ENCODE measurements at regions of chr1 and their contacts with region 1.

Region 1: GRCh38 chr1:95072532-95073419 is at the start of gene ALG14:
- DNase-seq: peak; percentile 95
- H3K4me3 Mint-ChIP-seq: peak within 1 kb of the TSS; percentile 90
- H3K27ac Mint-ChIP-seq: peak within 1 kb of the TSS; percentile 92
- H3K4me1 Mint-ChIP-seq: peaks cover 14% of the 10 kb centered on the region
- H3K27me3 Mint-ChIP-seq: no peaks in the 10 kb centered on the region
- total RNA-seq, gene ALG14: 4.3 to 4.4 TPM

Region 2: DNA sequence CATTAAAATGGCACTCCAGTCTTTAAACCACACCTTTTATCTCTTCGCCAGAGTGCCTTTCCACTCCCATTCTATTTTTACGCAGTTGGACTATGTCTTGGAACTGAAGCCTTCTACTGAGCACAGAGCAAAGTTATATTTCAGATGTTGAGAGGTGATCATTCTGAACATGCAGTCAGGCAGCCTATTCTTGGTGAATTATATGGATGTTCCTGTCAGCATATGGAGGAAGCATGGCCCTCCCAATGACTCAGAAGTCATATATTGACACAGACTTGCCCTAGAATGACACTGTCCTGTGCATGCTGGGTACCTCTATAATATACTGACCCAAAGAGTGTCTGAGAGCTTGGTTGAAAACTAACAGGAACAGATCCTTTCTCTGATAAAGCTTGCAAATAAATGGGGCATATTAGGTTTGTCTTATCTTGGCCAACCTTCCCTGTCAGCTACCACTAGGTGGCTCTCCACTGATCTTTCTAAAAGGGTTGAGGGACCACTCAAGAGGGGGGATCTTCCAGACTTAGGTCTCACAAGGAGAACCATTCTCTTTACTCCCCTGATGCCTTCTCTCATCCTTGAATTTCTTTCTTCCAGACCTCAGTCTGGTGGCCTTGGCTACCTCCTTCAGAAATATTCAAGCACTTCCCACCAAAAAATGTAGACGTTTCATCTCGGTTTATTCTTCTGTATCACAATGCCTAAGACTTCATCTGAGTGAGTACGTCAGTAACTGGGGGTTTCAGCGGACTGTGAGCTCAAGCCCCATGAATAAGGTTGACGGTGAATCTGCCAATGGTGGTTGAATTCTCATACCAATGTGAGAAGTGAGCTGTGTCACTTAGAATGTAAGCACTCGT is 11.8 kb after region 1 on chr1:
- CTCF ChIA-PET with region 1: interaction called, 33 read pairs
- POLR2A ChIA-PET with region 1: no interaction called
- intact Hi-C with region 1: no loop called
- DNase-seq: peak; percentile 15
- H3K4me3 Mint-ChIP-seq: no peak overlapping the region
- H3K27ac Mint-ChIP-seq: no peak overlapping the region
- H3K4me1 Mint-ChIP-seq: no peaks in the 10 kb centered on the region
- H3K27me3 Mint-ChIP-seq: peaks cover 6% of the 10 kb centered on the region

Region 3: DNA sequence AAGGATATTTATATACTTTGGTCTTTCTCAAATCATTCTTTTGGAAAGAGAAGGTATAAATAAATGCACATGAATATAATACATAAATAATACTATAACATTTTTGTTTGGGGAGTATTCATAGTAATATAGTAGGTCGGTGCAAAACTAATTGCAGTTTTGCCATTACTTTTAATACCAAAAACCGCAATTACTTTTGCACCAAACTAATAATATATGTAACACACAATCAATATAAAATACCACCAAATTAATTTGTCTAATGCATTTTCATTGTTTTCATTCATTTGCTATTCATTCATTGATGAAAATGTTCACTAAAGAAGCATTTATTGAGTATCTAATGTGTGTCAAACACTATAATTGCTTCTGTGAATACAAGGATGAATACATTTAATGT is 380.3 kb after region 1 on chr1:
- CTCF ChIA-PET with region 1: no interaction called
- POLR2A ChIA-PET with region 1: no interaction called
- intact Hi-C with region 1: no loop called
- DNase-seq: no peak
- H3K4me3 Mint-ChIP-seq: no peak overlapping the region
- H3K27ac Mint-ChIP-seq: no peak overlapping the region
- H3K4me1 Mint-ChIP-seq: no peaks in the 10 kb centered on the region
- H3K27me3 Mint-ChIP-seq: no peaks in the 10 kb centered on the region

Region 4: DNA sequence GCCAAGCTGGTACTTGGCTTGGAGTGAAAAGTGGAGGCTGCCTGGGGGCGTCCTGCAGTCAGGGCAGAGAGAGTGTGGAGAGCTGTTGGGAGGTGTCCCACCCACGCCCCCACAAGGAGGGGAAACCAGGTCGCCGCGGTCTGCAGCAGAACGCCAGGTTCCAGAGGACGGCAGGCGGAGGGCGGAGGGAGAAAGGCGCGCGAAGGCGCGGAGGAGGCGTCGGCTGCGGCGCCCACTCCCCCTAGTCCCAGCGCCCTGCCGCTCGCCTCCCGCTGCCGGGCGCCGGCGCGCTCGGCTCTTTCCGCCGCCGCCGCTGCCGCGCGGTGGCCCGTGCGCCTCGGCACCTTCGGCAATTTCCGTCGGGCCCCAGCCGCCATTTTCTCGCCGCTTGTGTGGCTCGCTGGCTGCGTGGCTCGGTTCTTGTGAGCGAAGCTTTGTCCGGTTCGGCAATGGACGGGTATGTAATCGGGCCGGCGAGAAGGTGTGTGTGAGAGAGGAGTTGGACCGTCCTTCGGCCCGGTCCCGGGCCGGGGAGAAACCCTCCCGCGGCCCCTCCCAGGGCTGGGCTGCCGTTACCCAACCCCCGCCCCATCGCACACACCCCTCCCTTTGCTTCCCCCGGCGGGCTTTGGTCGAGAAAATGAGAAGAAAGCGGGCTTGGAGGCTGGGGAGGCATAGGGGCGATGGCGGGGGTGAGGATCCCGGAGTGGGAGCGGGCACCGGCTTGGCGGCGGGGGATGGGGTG is 1648.8 kb after region 1 on chr1 and contains the start of gene PTBP2:
- CTCF ChIA-PET with region 1: no interaction called
- POLR2A ChIA-PET with region 1: no interaction called
- intact Hi-C with region 1: loop called (anchors 5 kb)
- DNase-seq: peak; percentile 88
- H3K4me3 Mint-ChIP-seq: peak within 1 kb of the TSS; percentile 89
- H3K27ac Mint-ChIP-seq: peak within 1 kb of the TSS; percentile 80
- H3K4me1 Mint-ChIP-seq: peaks cover 23% of the 10 kb centered on the region
- H3K27me3 Mint-ChIP-seq: no peaks in the 10 kb centered on the region
- total RNA-seq, gene PTBP2: 9.2 to 10.1 TPM

Measured in activated CD4-positive, alpha-beta memory T cell treated with anti-CD3 and anti-CD28 coated beads for 36 hours (primary cell).